K562 (cell line): ENCODE measurements at regions of chr5 and their contacts with region 1.

Region 1: GRCh38 chr5:171418316-171418981 is 998 bp upstream of the FGF18 start:
- DNase-seq: peak; percentile 84 to 90 (median 86)
- ATAC-seq: peak; percentile 94
- H3K4me3 ChIP-seq: no peak overlapping the region
- H3K27ac ChIP-seq: no peak overlapping the region
- H3K4me1 ChIP-seq: peaks cover 9 to 19% of the 10 kb centered on the region in 2 experiments; a peak in 3 of 5 replicates
- H3K27me3 ChIP-seq: no peaks in the 10 kb centered on the region
- CTCF ChIP-seq: peak; percentile 93 to 96 (median 95)
- EP300 ChIP-seq: no peak
- POLR2A ChIP-seq: no peak
- RAD21 ChIP-seq: peak; percentile 93 to 94

Region 2: GRCh38 chr5:171405601-171406005 is 12.8 kb before region 1 on chr5:
- CTCF ChIA-PET with region 1: no interaction called
- POLR2A ChIA-PET with region 1: no interaction called
- in situ Hi-C with region 1: no loop called
- intact Hi-C with region 1: no loop called
- DNase-seq: no peak
- ATAC-seq: peak; percentile 59
- H3K4me3 ChIP-seq: no peak overlapping the region
- H3K27ac ChIP-seq: no peak overlapping the region
- H3K4me1 ChIP-seq: peaks cover 3 to 13% of the 10 kb centered on the region in 2 experiments; a peak in 3 of 5 replicates
- H3K27me3 ChIP-seq: no peaks in the 10 kb centered on the region
- CTCF ChIP-seq: peak in 2 of 3 experiments; percentile 41 to 45; a peak in 3 of 6 replicates
- EP300 ChIP-seq: no peak
- POLR2A ChIP-seq: no peak; the same call in 1 of the 2 replicates
- RAD21 ChIP-seq: peak in 1 of 2 experiments; percentile 24; a peak in 2 of 4 replicates

Region 3: GRCh38 chr5:171606414-171607024 is 188.1 kb after region 1 on chr5:
- CTCF ChIA-PET with region 1: interaction called, 9 read pairs
- POLR2A ChIA-PET with region 1: interaction called, 4 read pairs
- in situ Hi-C with region 1: no loop called
- intact Hi-C with region 1: loop called (anchors 2 kb)
- DNase-seq: peak; percentile 49 to 58 (median 54)
- ATAC-seq: peak; percentile 81
- H3K4me3 ChIP-seq: no peak overlapping the region
- H3K27ac ChIP-seq: no peak overlapping the region
- H3K4me1 ChIP-seq: no peaks in the 10 kb centered on the region
- H3K27me3 ChIP-seq: no peaks in the 10 kb centered on the region; a peak in 1 of 5 replicates
- CTCF ChIP-seq: peak; percentile 61 to 64 (median 61)
- EP300 ChIP-seq: no peak
- POLR2A ChIP-seq: no peak
- RAD21 ChIP-seq: peak; percentile 46 to 76

Region 4: DNA sequence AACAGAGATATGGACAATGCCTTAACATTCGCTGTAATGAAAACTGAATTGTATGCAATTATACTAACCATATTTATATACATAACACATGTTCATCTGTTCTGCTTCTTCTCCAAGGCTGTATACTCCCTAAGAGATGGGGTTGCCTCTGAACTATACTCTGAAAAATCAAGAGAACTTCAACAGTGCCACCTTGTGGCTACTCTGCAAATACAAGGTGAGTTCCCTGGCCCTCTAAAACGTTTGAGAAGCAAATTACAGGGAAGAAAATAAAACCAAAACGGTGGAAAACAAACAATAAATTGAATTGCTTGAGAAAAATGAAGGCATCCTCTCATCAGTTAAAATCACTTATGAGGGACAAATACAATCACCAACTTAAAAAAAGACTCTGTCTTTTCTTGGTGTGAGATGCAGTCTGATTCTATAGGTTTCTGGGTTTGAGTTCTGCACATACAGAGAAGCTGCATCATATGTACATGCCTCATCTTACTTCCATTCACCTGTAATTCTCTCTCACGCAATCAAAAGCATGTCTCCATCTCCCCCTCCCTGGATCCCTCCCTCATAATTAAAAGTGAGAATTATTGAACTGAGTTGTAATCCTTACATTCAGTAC is 489.4 kb after region 1 on chr5:
- CTCF ChIA-PET with region 1: interaction called, 15 read pairs
- POLR2A ChIA-PET with region 1: no interaction called
- in situ Hi-C with region 1: loop called (anchors 5 kb)
- intact Hi-C with region 1: loop called (anchors 2 kb)
- DNase-seq: peak; percentile 48 to 73 (median 67)
- ATAC-seq: peak; percentile 96
- H3K4me3 ChIP-seq: no peak overlapping the region
- H3K27ac ChIP-seq: no peak overlapping the region
- H3K4me1 ChIP-seq: no peaks in the 10 kb centered on the region
- H3K27me3 ChIP-seq: no peaks in the 10 kb centered on the region
- CTCF ChIP-seq: peak; percentile 51 to 74 (median 73); a peak in 5 of 6 replicates
- EP300 ChIP-seq: no peak
- POLR2A ChIP-seq: no peak
- RAD21 ChIP-seq: peak; percentile 77 to 78

Region 5: DNA sequence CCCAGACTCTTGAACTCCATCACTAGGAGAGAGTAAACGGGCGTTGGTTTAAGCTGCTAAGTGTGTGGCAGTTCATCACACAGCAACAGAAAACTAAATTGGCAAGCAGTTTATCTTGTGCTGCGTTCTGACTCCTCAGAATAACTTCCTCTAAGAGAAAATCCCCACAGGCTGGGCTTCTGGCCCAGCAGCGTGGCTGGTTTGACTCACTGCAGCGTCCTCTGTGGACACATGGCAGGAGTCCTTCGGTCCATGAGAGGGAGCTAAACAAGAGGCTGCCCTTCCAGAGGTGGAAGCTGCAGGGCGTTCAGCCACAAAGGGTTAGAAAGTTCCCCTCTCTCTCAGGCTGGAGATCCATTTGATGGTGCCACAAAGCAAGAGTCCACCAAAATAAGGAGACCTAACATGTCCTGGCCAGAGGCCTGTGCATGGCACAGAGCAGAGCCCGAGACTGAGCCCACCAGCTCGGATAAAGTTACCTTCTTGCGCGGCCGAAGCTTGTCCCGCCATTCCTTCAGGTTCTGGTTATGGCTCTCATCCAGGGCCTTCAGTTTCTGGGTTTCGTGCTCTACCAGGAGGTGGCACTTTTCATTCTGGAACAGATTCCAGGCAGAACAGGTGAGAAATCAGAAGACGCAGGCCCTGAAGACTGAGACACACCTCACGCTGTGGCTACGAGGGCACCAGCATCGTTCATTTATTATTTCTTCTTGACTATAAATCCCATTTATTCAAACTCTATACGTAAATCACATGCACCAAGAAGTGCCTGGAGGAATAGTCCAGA is 634.2 kb after region 1 on chr5:
- CTCF ChIA-PET with region 1: no interaction called
- POLR2A ChIA-PET with region 1: no interaction called
- in situ Hi-C with region 1: loop called (anchors 10 kb)
- intact Hi-C with region 1: loop called (anchors 5 kb)
- DNase-seq: peak in 1 of 4 experiments; percentile 18
- ATAC-seq: peak; percentile 75
- H3K4me3 ChIP-seq: no peak overlapping the region
- H3K27ac ChIP-seq: no peak overlapping the region; the same call in 2 of the 3 replicates
- H3K4me1 ChIP-seq: peaks cover 10 to 20% of the 10 kb centered on the region in 2 experiments; a peak in 4 of 5 replicates
- H3K27me3 ChIP-seq: peaks cover 0 to 7% of the 10 kb centered on the region in 2 experiments; a peak in 1 of 5 replicates
- CTCF ChIP-seq: peak in 2 of 3 experiments; percentile 26 to 51; a peak in 4 of 6 replicates
- EP300 ChIP-seq: no peak
- POLR2A ChIP-seq: no peak
- RAD21 ChIP-seq: no peak